CD4-positive, alpha-beta T cell (primary cell): ENCODE measurements at regions of chr7 and their contacts with region 1.

Region 1: GRCh38 chr7:116180302-116180701 is 30.0 kb upstream of the TES start:
- DNase-seq: peak in 8 of 14 experiments; percentile 4 to 78 (median 37)
- ATAC-seq: peak; percentile 91
- H3K4me3 ChIP-seq: no peak overlapping the region
- H3K4me3 Mint-ChIP-seq: no peak overlapping the region
- H3K27ac ChIP-seq: no peak overlapping the region
- H3K27ac Mint-ChIP-seq: no peak overlapping the region
- H3K4me1 ChIP-seq: peaks cover 3% of the 10 kb centered on the region
- H3K4me1 Mint-ChIP-seq: peaks cover 10% of the 10 kb centered on the region
- H3K27me3 ChIP-seq: no peaks in the 10 kb centered on the region
- H3K27me3 Mint-ChIP-seq: no peaks in the 10 kb centered on the region
- CTCF ChIP-seq: peak; percentile 85

Region 2: GRCh38 chr7:116211006-116211912 is 31.0 kb after region 1 on chr7:
- CTCF ChIA-PET with region 1: interaction called, 27 read pairs
- POLR2A ChIA-PET with region 1: interaction called, 40 read pairs
- intact Hi-C with region 1: loop called in 1 of 2 experiments (anchors 1 kb)
- DNase-seq: peak; percentile 64 to 93 (median 76)
- ATAC-seq: peak; percentile 79
- H3K4me3 ChIP-seq: peak overlapping the region; percentile 62
- H3K4me3 Mint-ChIP-seq: peak overlapping the region; percentile 98
- H3K27ac ChIP-seq: peak overlapping the region; percentile 79 to 93
- H3K27ac Mint-ChIP-seq: peak overlapping the region; percentile 99
- H3K4me1 ChIP-seq: peaks cover 22% of the 10 kb centered on the region
- H3K4me1 Mint-ChIP-seq: peaks cover 64% of the 10 kb centered on the region
- H3K27me3 ChIP-seq: no peaks in the 10 kb centered on the region
- H3K27me3 Mint-ChIP-seq: no peaks in the 10 kb centered on the region
- CTCF ChIP-seq: no peak

Region 3: DNA sequence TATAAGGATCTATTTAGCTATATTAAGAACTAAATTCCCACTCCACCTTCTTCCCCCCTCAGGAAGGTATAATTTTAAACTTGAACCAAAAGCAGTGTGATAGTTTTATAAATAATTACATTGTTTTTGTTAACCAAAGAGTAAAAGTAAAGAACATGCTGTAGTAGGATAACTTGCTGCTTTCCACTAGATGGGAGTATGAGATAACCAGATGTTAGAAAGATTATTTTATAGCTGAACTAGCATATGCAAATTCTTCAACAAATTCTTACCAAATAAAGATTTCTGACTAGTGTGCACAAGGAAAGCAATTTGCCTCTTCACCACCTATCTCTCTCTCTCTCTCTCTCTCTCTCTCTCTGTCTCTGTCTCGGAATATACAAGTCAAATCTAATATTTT is 61.9 kb after region 1 on chr7:
- CTCF ChIA-PET with region 1: interaction called, 91 read pairs
- POLR2A ChIA-PET with region 1: interaction called, 33 read pairs
- intact Hi-C with region 1: no loop called
- DNase-seq: no peak
- ATAC-seq: no peak
- H3K4me3 ChIP-seq: no peak overlapping the region
- H3K4me3 Mint-ChIP-seq: no peak overlapping the region
- H3K27ac ChIP-seq: no peak overlapping the region
- H3K27ac Mint-ChIP-seq: no peak overlapping the region
- H3K4me1 ChIP-seq: peaks cover 13% of the 10 kb centered on the region
- H3K4me1 Mint-ChIP-seq: peaks cover 76% of the 10 kb centered on the region
- H3K27me3 ChIP-seq: no peaks in the 10 kb centered on the region
- H3K27me3 Mint-ChIP-seq: no peaks in the 10 kb centered on the region
- CTCF ChIP-seq: no peak

Region 4: DNA sequence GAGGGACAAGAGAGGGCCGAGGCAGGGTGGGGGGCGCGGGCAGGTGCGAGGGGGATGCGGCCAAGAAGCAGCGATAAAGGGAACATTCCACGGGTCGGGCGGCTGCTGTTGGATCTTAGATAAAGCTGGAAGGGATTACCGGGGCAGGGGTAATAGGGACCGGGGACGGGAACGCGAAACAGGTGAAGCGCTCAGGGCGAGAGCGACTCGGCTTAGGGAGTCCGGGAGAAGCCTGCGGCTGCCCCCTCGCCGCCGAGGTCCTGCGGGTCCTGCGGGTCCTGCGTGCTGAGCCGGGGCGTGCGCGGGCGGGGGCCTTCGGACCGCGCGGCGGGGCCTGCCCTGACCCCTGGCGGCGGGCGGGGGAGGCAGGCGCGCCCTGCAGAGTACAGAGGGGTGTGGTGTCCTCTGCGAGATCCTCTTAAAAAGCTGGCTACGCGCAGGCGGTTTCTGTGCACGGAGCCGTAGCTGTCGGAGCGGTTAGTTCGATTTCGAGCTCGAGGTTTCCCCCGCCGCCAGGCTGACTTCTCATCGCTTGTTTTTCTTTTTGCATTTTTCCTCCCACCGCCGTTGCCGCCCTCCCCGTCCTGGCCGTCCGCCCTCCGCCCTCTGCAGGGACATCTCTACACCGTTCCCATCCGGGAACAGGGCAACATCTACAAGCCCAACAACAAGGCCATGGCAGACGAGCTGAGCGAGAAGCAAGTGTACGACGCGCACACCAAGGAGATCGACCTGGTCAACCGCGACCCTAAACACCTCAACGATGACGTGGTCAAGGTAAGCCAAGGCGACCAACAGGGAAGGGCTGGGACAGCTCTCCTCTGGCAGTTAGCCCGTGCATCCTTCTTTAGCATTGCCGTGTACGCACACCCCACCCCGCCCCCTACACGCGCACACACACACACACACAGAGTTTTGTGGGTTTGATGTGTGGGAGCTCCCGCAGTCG is 345.9 kb after region 1 on chr7:
- CTCF ChIA-PET with region 1: interaction called, 4 read pairs
- POLR2A ChIA-PET with region 1: no interaction called
- intact Hi-C with region 1: loop called in 1 of 2 experiments (anchors 2 kb)
- DNase-seq: peak; percentile 27 to 80 (median 50)
- ATAC-seq: peak; percentile 92
- H3K4me3 ChIP-seq: peak overlapping the region; percentile 52
- H3K4me3 Mint-ChIP-seq: peak overlapping the region; percentile 83
- H3K27ac ChIP-seq: no peak overlapping the region
- H3K27ac Mint-ChIP-seq: no peak overlapping the region
- H3K4me1 ChIP-seq: peaks cover 24% of the 10 kb centered on the region
- H3K4me1 Mint-ChIP-seq: peaks cover 20% of the 10 kb centered on the region
- H3K27me3 ChIP-seq: peaks cover 49 to 57% of the 10 kb centered on the region in 2 experiments
- H3K27me3 Mint-ChIP-seq: peaks cover 91% of the 10 kb centered on the region
- CTCF ChIP-seq: peak; percentile 61

Region 5: GRCh38 chr7:116809636-116810266 is 629.4 kb after region 1 on chr7:
- CTCF ChIA-PET with region 1: no interaction called
- POLR2A ChIA-PET with region 1: no interaction called
- intact Hi-C with region 1: loop called in 1 of 2 experiments (anchors 1 kb)
- DNase-seq: peak in 4 of 14 experiments; percentile 7 to 62 (median 54)
- ATAC-seq: peak; percentile 48
- H3K4me3 ChIP-seq: no peak overlapping the region
- H3K4me3 Mint-ChIP-seq: no peak overlapping the region
- H3K27ac ChIP-seq: no peak overlapping the region
- H3K27ac Mint-ChIP-seq: no peak overlapping the region
- H3K4me1 ChIP-seq: no peaks in the 10 kb centered on the region
- H3K4me1 Mint-ChIP-seq: no peaks in the 10 kb centered on the region
- H3K27me3 ChIP-seq: no peaks in the 10 kb centered on the region
- H3K27me3 Mint-ChIP-seq: no peaks in the 10 kb centered on the region
- CTCF ChIP-seq: peak; percentile 69